HepG2 (cell line): ENCODE measurements at regions of chr15 and their contacts with region 1.

Region 1: GRCh38 chr15:56052395-56053045 is 59.1 kb upstream of the NEDD4 start:
- DNase-seq: peak; percentile 13
- ATAC-seq: no peak
- H3K4me3 ChIP-seq: no peak overlapping the region
- H3K27ac ChIP-seq: no peak overlapping the region
- H3K4me1 ChIP-seq: no peaks in the 10 kb centered on the region
- H3K27me3 ChIP-seq: no peaks in the 10 kb centered on the region
- CTCF ChIP-seq: peak; percentile 62
- EP300 ChIP-seq: no peak
- POLR2A ChIP-seq: no peak
- RAD21 ChIP-seq: no peak

Region 2: DNA sequence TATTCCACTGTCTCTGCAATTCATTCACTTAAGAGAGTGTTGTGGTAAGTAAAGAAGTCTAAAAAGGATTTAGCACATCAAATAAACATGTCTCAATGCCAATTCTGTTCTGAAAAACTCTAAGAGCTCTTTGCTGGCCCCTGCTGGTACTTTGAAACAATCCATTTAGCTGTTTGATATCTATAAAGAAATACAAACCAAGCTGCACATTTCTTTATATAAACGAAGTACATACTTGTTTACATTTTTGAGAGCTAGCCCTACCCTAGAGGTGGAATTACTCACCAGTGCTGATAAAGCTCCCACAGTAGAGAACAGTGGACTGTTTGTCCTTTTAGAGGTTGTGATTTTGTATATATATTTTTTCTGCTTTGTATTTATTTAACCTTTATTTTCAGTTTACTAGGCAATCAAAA is 134.6 kb before region 1 on chr15:
- CTCF ChIA-PET with region 1: interaction called, 3 read pairs
- POLR2A ChIA-PET with region 1: no interaction called
- in situ Hi-C with region 1: no loop called
- intact Hi-C with region 1: loop called (anchors 5 kb)
- DNase-seq: peak; percentile 58
- ATAC-seq: peak; percentile 75
- H3K4me3 ChIP-seq: no peak overlapping the region
- H3K27ac ChIP-seq: no peak overlapping the region
- H3K4me1 ChIP-seq: peaks cover 10% of the 10 kb centered on the region; the same call in 1 of the 2 replicates
- H3K27me3 ChIP-seq: no peaks in the 10 kb centered on the region
- CTCF ChIP-seq: 0 out of 2 replicates have a peak, but pooled peaks have one; percentile 33
- EP300 ChIP-seq: no peak
- POLR2A ChIP-seq: no peak
- RAD21 ChIP-seq: no peak

Region 3: GRCh38 chr15:55993111-55993803 is 59.3 kb before region 1 on chr15 and contains the start of gene NEDD4:
- CTCF ChIA-PET with region 1: interaction called, 3 read pairs
- POLR2A ChIA-PET with region 1: no interaction called
- in situ Hi-C with region 1: no loop called
- intact Hi-C with region 1: loop called (anchors 2 kb)
- DNase-seq: peak; percentile 76
- ATAC-seq: peak; percentile 94
- H3K4me3 ChIP-seq: peak within 1 kb of the TSS; percentile 89 to 94 (median 90)
- H3K27ac ChIP-seq: peak within 1 kb of the TSS; percentile 83
- H3K4me1 ChIP-seq: peaks cover 16% of the 10 kb centered on the region
- H3K27me3 ChIP-seq: no peaks in the 10 kb centered on the region; a peak in 1 of 5 replicates
- CTCF ChIP-seq: peak; percentile 79
- EP300 ChIP-seq: no peak
- POLR2A ChIP-seq: peak; percentile 48 to 71
- RAD21 ChIP-seq: peak; percentile 27
- total RNA-seq, gene NEDD4: 13.0 and 25.6 TPM in 2 replicates